OCI-LY7 (cell line): ENCODE measurements at regions of chr3 and their contacts with region 1.

Region 1: DNA sequence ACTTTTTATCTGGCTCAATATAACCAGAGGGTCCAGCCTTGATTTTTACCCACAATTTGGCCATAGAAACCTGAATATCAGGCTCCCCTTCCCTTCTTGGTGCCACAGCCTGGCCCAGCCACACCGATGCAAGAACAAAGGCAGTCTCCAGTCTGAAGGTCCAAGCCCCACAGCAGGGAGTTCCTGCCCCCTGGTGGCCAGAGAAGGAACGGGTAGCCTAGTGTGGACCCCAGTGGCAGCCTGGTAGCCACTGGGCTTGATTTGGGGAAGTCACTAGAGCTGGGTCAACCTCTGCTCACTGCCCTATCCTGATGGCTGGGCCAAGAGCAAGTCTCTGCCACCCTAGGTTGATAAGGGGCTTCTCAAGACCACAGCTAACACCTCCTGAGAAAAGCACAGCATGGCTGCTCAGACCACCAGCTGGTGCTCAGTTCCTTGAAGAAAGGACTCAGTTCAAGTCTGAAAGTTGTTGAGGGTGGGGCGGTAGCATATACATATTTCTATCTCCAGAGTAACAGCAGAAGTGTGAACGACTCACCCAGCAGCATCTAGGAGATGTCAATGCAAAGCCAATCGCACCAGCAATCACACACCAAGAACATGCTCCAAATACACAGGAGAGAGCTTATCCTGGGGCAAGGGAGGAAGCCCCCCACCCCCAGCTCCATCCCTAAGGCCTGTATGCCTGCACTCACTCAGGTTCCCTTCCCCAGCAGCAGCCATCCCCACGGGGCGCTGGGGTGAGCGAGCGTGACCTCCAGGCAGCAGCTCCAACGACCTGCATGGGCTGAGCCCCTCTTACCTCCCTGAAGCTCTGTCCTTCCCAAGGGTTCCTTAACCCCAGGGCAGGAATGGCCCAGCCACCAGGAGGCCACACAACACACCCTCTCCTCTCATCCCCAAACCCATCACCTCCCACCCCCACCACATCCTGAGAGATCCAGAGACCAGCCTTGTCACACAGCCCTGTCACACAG is 7.6 kb downstream of the PFKFB4 start:
- DNase-seq: peak; percentile 86
- H3K4me3 ChIP-seq: no peak overlapping the region
- H3K27ac ChIP-seq: no peak overlapping the region
- H3K4me1 ChIP-seq: no peaks in the 10 kb centered on the region
- CTCF ChIP-seq: peak; percentile 98

Region 2: GRCh38 chr3:47899495-47900125 is 649.4 kb before region 1 on chr3:
- CTCF ChIA-PET with region 1: no interaction called
- POLR2A ChIA-PET with region 1: no interaction called
- intact Hi-C with region 1: no loop called
- DNase-seq: no peak
- H3K4me3 ChIP-seq: no peak overlapping the region
- H3K27ac ChIP-seq: no peak overlapping the region
- H3K4me1 ChIP-seq: no peaks in the 10 kb centered on the region
- CTCF ChIP-seq: no peak

Region 3: GRCh38 chr3:48507351-48508061 is 41.5 kb before region 1 on chr3:
- CTCF ChIA-PET with region 1: interaction called, 3 read pairs
- POLR2A ChIA-PET with region 1: interaction called, 3 read pairs
- intact Hi-C with region 1: loop called (anchors 5 kb)
- DNase-seq: peak; percentile 78
- H3K4me3 ChIP-seq: no peak overlapping the region
- H3K27ac ChIP-seq: no peak overlapping the region
- H3K4me1 ChIP-seq: no peaks in the 10 kb centered on the region
- CTCF ChIP-seq: peak; percentile 87